ENCODE measurements at regions of chr10 and their contacts with region 1.

Region 1: DNA sequence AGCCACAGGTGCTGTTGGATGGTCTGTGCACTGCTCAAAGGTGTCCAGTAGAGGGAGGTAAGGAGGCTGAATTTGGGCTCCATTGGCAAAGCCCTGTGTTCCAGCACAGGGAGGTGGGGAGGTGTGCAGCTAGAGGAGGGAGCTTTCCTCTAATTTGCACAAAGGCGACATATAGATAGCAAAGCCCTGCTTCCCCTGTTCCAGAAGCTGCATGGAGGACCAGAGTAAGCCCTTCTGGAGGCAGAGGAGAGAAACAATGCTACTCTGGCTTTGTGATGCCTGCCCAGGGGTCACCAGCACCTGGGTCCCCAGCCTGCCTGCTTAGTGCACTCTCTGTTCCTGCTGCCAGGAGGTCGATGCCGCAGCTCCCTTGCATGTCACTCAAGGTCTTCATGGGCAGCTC is 3.4 kb upstream of the ARHGAP22 start:
- DNase-seq: no peak
- H3K4me3 ChIP-seq: no peak overlapping the region
- H3K27ac ChIP-seq: peak overlapping the region; percentile 95
- H3K4me1 ChIP-seq: peaks cover 59% of the 10 kb centered on the region
- H3K27me3 ChIP-seq: no peaks in the 10 kb centered on the region
- CTCF ChIP-seq: peak; percentile 74 to 75
- POLR2A ChIP-seq: no peak

Region 2: GRCh38 chr10:48306265-48306869 is 301.9 kb before region 1 on chr10 and contains the start of gene MAPK8:
- CTCF ChIA-PET with region 1: interaction called, 3 read pairs
- POLR2A ChIA-PET with region 1: no interaction called
- dilution Hi-C with region 1: no loop called
- intact Hi-C with region 1: loop called (anchors 2 kb)
- DNase-seq: peak; percentile 85
- H3K4me3 ChIP-seq: peak within 1 kb of the TSS; percentile 64 to 97 (median 80)
- H3K27ac ChIP-seq: peak within 1 kb of the TSS; percentile 76
- H3K4me1 ChIP-seq: peaks cover 29% of the 10 kb centered on the region
- H3K27me3 ChIP-seq: peaks cover 6% of the 10 kb centered on the region in 2 experiments
- CTCF ChIP-seq: no peak
- POLR2A ChIP-seq: peak; percentile 85
- total RNA-seq, gene MAPK8: 50.1 and 56.2 TPM in 2 replicates

Region 3: DNA sequence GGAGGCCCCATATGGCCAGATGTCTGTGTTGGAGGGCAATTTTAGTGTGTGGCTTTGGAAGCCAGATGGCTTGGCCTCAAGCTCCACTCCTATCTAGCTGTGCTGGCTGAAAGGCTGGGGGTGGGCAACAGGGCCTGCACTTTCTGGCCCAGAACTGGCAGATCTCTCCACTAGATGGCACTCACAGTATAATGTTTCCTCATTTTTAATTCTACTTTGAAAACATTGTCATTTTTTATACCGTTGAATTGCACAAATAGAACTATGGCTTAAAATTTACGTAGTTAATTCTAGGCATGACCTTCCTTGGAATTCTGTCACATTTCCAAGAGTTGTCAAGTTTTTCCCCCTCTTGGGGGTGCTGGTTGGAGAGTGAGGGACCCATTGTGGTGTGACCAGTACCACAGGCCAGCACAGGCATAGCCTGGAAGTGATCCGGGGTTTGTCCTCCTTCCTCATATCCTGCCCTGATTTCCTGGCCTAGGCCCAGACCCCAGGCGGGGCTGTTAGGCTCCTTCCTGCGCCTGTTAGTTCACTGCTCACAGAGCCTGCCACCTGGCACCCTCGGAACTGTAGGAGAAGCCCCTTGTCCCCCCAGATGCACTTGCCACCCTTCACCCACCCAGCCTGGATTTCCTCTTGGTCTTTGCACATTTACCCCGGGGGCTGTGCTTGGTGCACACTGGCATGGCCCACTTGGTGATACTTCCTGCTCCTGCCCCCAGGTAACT is 56.3 kb before region 1 on chr10:
- CTCF ChIA-PET with region 1: interaction called, 27 read pairs
- POLR2A ChIA-PET with region 1: no interaction called
- dilution Hi-C with region 1: no loop called
- intact Hi-C with region 1: loop called (anchors 1 kb)
- DNase-seq: peak; percentile 68
- H3K4me3 ChIP-seq: no peak overlapping the region
- H3K27ac ChIP-seq: peak overlapping the region; percentile 45
- H3K4me1 ChIP-seq: peaks cover 37% of the 10 kb centered on the region
- H3K27me3 ChIP-seq: no peaks in the 10 kb centered on the region
- CTCF ChIP-seq: peak; percentile 66 to 77
- POLR2A ChIP-seq: no peak

Region 4: DNA sequence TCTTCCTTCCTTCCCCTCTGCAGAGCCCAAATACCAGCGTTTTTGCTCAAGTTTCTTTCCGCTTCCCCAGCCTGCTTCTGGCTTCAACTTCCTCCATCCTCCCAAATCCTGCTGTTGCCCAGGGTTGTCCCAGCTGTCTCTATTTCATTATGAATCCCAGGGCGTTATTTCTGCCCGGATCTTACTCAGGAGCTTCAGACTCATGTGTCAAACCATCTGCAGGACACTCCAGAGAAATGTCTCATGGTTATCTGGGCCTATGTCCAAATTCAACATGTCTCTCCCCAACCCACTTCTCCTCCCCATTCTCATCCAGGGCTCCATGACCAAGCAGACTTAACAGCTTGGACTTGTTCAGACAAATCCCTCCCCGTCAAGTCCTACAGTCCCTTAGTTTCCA is 19.0 kb before region 1 on chr10:
- CTCF ChIA-PET with region 1: interaction called, 21 read pairs
- POLR2A ChIA-PET with region 1: interaction called, 6 read pairs
- dilution Hi-C with region 1: no loop called
- intact Hi-C with region 1: loop called (anchors 2 kb)
- DNase-seq: peak; percentile 53
- H3K4me3 ChIP-seq: no peak overlapping the region
- H3K27ac ChIP-seq: peak overlapping the region; percentile 10
- H3K4me1 ChIP-seq: peaks cover 16% of the 10 kb centered on the region
- H3K27me3 ChIP-seq: no peaks in the 10 kb centered on the region
- CTCF ChIP-seq: no peak
- POLR2A ChIP-seq: no peak

Region 5: GRCh38 chr10:48623607-48624132 is 15.4 kb after region 1 on chr10:
- CTCF ChIA-PET with region 1: interaction called, 12 read pairs
- POLR2A ChIA-PET with region 1: no interaction called
- dilution Hi-C with region 1: no loop called
- intact Hi-C with region 1: loop called (anchors 1 kb)
- DNase-seq: peak; percentile 10
- H3K4me3 ChIP-seq: no peak overlapping the region
- H3K27ac ChIP-seq: no peak overlapping the region
- H3K4me1 ChIP-seq: peaks cover 28% of the 10 kb centered on the region
- H3K27me3 ChIP-seq: no peaks in the 10 kb centered on the region
- CTCF ChIP-seq: no peak
- POLR2A ChIP-seq: no peak